GM12878 (cell line): ENCODE measurements at regions of chr19 and their contacts with region 1.

Region 1: GRCh38 chr19:14347999-14348889 is 33.0 kb upstream of the ADGRE5 start:
- DNase-seq: no peak
- ATAC-seq: peak; percentile 90
- H3K4me3 ChIP-seq: no peak overlapping the region
- H3K27ac ChIP-seq: no peak overlapping the region; the same call in 1 of the 2 replicates
- H3K4me1 ChIP-seq: peaks cover 9% of the 10 kb centered on the region
- H3K27me3 ChIP-seq: no peaks in the 10 kb centered on the region
- CTCF ChIP-seq: peak; percentile 97 to 99 (median 98)
- EP300 ChIP-seq: no peak
- POLR2A ChIP-seq: no peak
- RAD21 ChIP-seq: peak; percentile 98

Region 2: DNA sequence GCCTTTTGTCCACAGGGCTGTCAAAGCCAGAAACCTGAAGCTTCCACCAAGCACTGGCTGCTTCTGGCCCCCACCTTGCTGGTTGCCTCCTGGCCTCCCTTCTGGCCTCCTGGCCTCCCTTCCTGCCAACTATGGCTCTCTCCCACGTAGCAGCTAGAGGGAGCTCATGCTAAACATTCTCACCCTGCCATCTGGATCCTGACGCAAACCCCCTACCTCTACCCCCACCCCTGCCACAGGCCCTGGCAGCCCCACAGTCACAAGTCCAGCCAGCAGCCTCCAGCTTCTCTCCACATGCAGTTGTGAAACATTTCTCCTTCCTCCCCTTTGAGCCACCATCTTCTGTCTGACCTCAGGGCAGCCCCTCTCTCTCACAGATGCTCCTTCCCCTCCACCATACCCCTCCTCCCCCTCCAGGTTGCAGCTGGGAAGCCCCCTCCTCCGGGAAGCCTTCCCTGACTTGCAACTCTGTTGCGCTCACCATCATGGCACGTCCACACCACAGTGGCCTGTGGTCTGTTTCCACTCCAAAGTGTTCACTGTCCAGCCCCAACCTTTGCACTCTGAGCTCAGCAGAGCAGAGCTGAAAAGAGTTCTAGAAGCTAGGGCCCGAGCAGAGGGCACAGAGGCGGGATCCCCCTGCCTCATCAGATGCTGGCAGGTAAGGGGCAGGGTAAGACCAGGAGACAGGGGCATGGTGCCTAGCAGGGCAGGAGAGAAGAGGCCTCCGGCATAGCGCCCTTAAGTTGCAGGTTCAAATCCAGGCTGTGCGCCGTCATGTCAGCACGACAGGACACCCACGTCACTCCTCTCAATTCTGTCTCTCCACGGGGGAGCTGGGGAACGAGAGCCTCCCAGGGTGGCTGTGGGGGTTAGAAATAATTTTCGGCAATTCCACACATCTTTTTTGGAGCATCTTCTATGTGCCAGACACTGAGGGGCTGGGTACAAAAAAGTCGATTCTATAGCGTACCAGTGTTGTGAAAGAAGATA is 149.6 kb before region 1 on chr19:
- CTCF ChIA-PET with region 1: interaction called, 95 read pairs
- POLR2A ChIA-PET with region 1: interaction called, 3 read pairs
- RAD21 ChIA-PET with region 1: interaction called, 33 read pairs
- SMC1A ChIA-PET with region 1: interaction called, 35 read pairs
- in situ Hi-C with region 1: loop called (anchors 5 kb)
- intact Hi-C with region 1: loop called (anchors 1 kb)
- DNase-seq: no peak
- ATAC-seq: peak; percentile 20; the same call in 2 of the 3 replicates
- H3K4me3 ChIP-seq: no peak overlapping the region
- H3K27ac ChIP-seq: no peak overlapping the region
- H3K4me1 ChIP-seq: no peaks in the 10 kb centered on the region; the same call in 1 of the 2 replicates
- H3K27me3 ChIP-seq: no peaks in the 10 kb centered on the region
- CTCF ChIP-seq: peak in 2 of 3 experiments; percentile 8 to 25; a peak in 1 of 6 replicates
- EP300 ChIP-seq: no peak
- POLR2A ChIP-seq: no peak
- RAD21 ChIP-seq: no peak

Region 3: GRCh38 chr19:14310055-14310454 is 38.2 kb before region 1 on chr19:
- CTCF ChIA-PET with region 1: interaction called, 5 read pairs
- POLR2A ChIA-PET with region 1: no interaction called
- RAD21 ChIA-PET with region 1: interaction called, 10 read pairs
- SMC1A ChIA-PET with region 1: no interaction called
- in situ Hi-C with region 1: no loop called
- intact Hi-C with region 1: no loop called
- DNase-seq: peak; percentile 68
- ATAC-seq: peak; percentile 95
- H3K4me3 ChIP-seq: no peak overlapping the region
- H3K27ac ChIP-seq: no peak overlapping the region
- H3K4me1 ChIP-seq: peaks cover 19% of the 10 kb centered on the region
- H3K27me3 ChIP-seq: no peaks in the 10 kb centered on the region
- CTCF ChIP-seq: no peak
- EP300 ChIP-seq: peak; percentile 27 to 71; a peak in 2 of 4 replicates
- POLR2A ChIP-seq: no peak
- RAD21 ChIP-seq: no peak

Region 4: DNA sequence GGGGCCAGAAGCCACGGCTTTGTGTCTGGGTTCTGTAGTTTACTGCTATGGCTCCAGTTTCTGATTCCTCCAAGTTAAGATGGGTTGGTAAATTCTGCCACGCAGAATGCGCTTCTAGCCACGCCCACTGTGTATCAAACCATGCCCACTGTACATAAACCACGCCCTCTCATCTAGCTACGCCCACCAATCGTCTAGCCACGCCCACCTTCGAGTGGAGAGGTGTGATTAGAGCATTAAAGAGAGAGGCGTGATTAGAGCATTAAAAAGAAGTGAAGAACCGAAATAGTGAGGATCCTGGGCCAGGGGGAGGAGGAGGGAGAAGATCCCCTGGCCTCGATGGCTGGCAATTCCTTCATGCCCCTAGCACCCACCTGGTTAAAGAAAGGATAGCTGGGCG is 10.7 kb before region 1 on chr19:
- CTCF ChIA-PET with region 1: interaction called, 15 read pairs
- POLR2A ChIA-PET with region 1: no interaction called
- RAD21 ChIA-PET with region 1: no interaction called
- SMC1A ChIA-PET with region 1: no interaction called
- in situ Hi-C with region 1: no loop called
- intact Hi-C with region 1: no loop called
- DNase-seq: no peak
- ATAC-seq: peak; percentile 65
- H3K4me3 ChIP-seq: no peak overlapping the region
- H3K27ac ChIP-seq: no peak overlapping the region
- H3K4me1 ChIP-seq: no peaks in the 10 kb centered on the region
- H3K27me3 ChIP-seq: no peaks in the 10 kb centered on the region
- CTCF ChIP-seq: no peak
- EP300 ChIP-seq: no peak
- POLR2A ChIP-seq: no peak
- RAD21 ChIP-seq: no peak

Region 5: DNA sequence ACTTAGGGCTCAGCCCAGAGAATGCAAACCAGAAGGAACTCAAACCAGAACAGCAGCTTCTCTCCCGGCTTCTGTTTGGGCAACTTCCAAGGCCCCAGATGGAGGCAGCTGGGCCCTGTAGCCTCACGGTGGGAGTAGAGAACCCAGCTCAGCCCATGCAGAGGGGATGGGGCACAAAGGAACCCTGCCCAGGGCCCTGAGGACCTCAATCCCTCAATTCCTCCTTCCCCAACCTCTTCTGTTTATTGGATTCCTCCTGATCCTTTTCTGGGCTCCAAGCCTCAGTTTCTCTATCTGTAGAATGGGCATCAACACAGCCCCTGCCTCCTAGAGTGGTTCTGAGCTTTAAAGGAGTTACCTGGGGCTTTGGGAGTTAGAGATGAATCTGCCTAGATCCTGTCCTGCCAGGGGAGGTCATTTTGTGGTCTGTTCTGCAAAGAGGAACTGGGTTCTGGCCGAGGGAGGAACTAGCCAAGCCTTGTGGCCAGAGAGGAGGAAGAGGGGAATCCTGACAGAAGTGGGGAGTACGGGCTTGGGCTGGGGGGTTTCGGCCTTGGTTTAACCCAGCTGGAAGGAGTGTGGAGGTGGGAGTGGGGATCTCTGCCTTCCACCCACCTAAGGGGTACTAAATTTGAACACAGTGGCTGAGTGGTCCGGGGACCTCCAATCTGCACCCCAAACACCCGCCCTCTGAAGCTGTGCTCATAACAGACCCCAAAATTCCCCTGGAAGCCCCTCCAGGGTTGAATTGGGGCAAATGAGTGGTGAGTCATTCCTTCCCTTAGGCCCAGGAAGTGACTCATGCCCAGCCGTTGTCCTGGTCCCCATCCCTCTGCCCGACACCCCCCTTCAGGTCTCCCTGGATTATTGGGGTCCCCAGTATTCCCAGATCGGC is 35.7 kb after region 1 on chr19:
- CTCF ChIA-PET with region 1: interaction called, 10 read pairs
- POLR2A ChIA-PET with region 1: interaction called, 4 read pairs
- RAD21 ChIA-PET with region 1: interaction called, 6 read pairs
- SMC1A ChIA-PET with region 1: interaction called, 9 read pairs
- in situ Hi-C with region 1: no loop called
- intact Hi-C with region 1: no loop called
- DNase-seq: no peak
- ATAC-seq: peak; percentile 60
- H3K4me3 ChIP-seq: peak overlapping the region; percentile 86
- H3K27ac ChIP-seq: peak overlapping the region; percentile 98
- H3K4me1 ChIP-seq: peaks cover 20% of the 10 kb centered on the region
- H3K27me3 ChIP-seq: no peaks in the 10 kb centered on the region
- CTCF ChIP-seq: no peak
- EP300 ChIP-seq: peak; percentile 55 to 70
- POLR2A ChIP-seq: peak; percentile 58; the same call in 1 of the 2 replicates
- RAD21 ChIP-seq: no peak